ENCODE measurements at regions of chr6 and their contacts with region 1.

Region 1: GRCh38 chr6:133973109-133973971 is 20.3 kb downstream of the TBPL1 start:
- DNase-seq: no peak
- ATAC-seq: peak in 1 of 4 donors; percentile 75
- H3K4me3 ChIP-seq: no peak overlapping the region
- H3K27ac ChIP-seq: no peak overlapping the region
- H3K4me1 ChIP-seq: peaks cover 31% of the 10 kb centered on the region
- H3K27me3 ChIP-seq: no peaks in the 10 kb centered on the region
- CTCF ChIP-seq: peak; percentile 79

Region 2: DNA sequence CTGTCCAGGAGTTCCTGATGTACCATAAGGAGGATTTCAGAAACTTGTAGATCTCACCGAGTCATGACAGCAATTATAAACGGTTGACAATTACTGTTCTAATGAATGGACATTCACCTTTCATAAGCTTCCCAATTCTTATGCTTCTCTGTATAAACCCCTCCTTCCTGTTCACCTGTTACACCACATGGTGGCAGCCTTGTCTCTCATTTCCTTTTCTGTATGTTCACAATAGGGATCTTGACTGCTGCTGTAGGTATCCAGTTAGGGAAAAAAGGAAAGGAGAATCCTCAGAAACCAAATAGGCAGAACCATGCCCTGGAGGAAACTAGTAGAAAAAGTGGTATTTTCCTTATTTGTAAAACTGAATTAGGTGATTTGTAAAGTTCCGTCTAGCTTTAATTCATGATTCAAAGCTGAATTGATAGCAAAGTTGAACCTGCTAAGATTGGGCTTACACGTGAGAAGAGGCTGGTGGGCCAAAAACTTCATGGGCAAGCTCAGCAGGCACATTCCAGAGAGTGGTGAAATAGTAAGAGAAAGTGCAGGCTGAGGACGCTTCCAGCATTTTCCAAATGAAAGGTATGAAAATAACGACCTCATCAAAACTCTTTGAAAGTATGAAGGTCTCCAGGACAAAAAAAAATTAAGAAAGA is 49.3 kb before region 1 on chr6:
- intact Hi-C with region 1: loop called in 1 of 2 experiments (anchors 5 kb)
- DNase-seq: peak in 1 of 2 donors; percentile 29
- ATAC-seq: peak; percentile 80 to 96 (median 94)
- H3K4me3 ChIP-seq: no peak overlapping the region
- H3K27ac ChIP-seq: no peak overlapping the region
- H3K4me1 ChIP-seq: no peaks in the 10 kb centered on the region
- H3K27me3 ChIP-seq: peaks cover 0 to 3% (median 0%) of the 10 kb centered on the region in 3 donors
- CTCF ChIP-seq: peak; percentile 85